GM13976 (cell line): ENCODE measurements at regions of chr11 and their contacts with region 1.

Region 1: DNA sequence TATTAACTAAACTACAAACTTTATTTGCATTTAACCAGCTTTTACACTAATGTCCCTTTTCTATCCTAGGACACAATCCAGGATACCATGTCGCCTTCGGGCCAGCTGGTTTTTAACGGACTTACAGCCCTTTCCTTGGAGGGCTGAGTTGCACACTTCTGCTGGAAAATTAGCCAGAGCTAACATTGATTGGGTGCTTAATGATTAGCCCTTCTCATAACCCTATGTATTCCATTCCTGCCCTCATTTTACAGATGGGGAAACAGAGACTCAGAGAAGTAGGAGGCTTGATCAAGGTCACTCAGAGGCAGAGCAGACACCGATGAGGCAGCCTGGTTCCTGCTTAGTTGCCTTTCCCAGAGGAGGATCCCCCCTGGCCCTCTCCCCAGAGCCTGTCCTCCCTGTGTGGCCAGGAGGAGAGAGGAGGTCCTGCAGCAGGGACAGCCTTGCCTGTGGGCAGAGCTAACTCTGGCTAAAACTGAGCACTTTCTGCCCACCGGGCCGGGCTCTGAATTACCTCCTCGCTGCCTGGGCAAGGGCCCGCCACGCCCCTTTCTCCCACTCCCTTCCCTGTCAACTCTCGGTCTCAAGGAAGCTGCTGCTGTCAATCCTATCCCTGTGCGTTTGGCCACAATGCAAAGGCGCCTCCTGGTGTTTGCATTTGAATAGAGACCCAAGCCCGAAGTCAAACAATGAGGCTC is 59.6 kb upstream of the PAX6 start:
- DNase-seq: peak; percentile 55
- CTCF ChIP-seq: peak; percentile 47

Region 2: DNA sequence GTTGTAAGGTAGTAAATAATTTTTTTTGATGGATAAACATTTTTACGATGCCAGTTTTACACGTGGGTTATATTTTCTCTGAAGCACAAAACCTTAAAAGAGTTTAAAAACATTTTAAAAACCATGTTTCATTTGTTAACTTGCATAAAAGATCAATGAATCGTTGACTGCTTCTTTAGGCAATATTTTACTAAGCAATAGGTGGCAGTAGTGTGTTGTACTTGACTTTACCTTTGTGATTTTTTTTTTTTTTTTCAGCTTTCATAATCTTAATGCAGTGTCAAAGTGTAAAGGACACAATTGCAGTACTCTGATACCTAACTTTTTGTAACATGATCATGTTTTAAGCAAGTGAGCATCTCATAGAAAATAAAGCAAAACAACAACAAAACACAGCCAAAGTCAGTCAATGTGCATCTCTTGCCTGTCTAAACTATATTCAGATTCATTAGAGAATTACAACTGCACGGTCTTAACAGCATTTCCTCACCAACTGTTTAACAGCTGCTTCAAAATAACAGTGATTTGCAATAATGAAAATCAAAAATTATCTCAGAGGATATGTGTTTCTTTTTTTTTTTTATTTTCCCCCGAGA is 473.4 kb before region 1 on chr11:
- in situ Hi-C with region 1: loop called (anchors 25 kb)
- DNase-seq: peak; percentile 31
- CTCF ChIP-seq: peak; percentile 23

Region 3: GRCh38 chr11:31768749-31769640 is 101.8 kb before region 1 on chr11:
- in situ Hi-C with region 1: no loop called
- DNase-seq: no peak
- CTCF ChIP-seq: no peak

Region 4: GRCh38 chr11:32088117-32088941 is 217.6 kb after region 1 on chr11:
- in situ Hi-C with region 1: no loop called
- DNase-seq: peak; percentile 40
- CTCF ChIP-seq: no peak